ENCODE measurements at regions of chr22 and their contacts with region 1.

Region 1: GRCh38 chr22:23385291-23386244 is 194.5 kb downstream of the IGLL1 start:
- DNase-seq: peak; percentile 93
- ATAC-seq: peak; percentile 80
- H3K4me3 Mint-ChIP-seq: no peak overlapping the region
- H3K27ac Mint-ChIP-seq: no peak overlapping the region
- H3K4me1 Mint-ChIP-seq: peaks cover 12% of the 10 kb centered on the region; the same call in 1 of the 2 replicates
- H3K27me3 Mint-ChIP-seq: peaks cover 3% of the 10 kb centered on the region; the same call in 1 of the 2 replicates
- CTCF ChIP-seq: peak; percentile 100

Region 2: GRCh38 chr22:23315341-23315917 is 70.1 kb before region 1 on chr22:
- CTCF ChIA-PET with region 1: interaction called, 14 read pairs
- POLR2A ChIA-PET with region 1: no interaction called
- DNase-seq: peak; percentile 83
- ATAC-seq: peak; percentile 78
- H3K4me3 Mint-ChIP-seq: no peak overlapping the region
- H3K27ac Mint-ChIP-seq: peak overlapping the region; percentile 57; the same call in 1 of the 2 replicates
- H3K4me1 Mint-ChIP-seq: peaks cover 3% of the 10 kb centered on the region
- H3K27me3 Mint-ChIP-seq: no peaks in the 10 kb centered on the region
- CTCF ChIP-seq: peak; percentile 50; the same call in 1 of the 2 replicates

Region 3: GRCh38 chr22:23368656-23369417 is 16.7 kb before region 1 on chr22:
- CTCF ChIA-PET with region 1: interaction called, 41 read pairs
- POLR2A ChIA-PET with region 1: no interaction called
- DNase-seq: no peak
- ATAC-seq: no peak
- H3K4me3 Mint-ChIP-seq: no peak overlapping the region
- H3K27ac Mint-ChIP-seq: no peak overlapping the region
- H3K4me1 Mint-ChIP-seq: peaks cover 22% of the 10 kb centered on the region
- H3K27me3 Mint-ChIP-seq: peaks cover 89% of the 10 kb centered on the region
- CTCF ChIP-seq: no peak

Region 4: DNA sequence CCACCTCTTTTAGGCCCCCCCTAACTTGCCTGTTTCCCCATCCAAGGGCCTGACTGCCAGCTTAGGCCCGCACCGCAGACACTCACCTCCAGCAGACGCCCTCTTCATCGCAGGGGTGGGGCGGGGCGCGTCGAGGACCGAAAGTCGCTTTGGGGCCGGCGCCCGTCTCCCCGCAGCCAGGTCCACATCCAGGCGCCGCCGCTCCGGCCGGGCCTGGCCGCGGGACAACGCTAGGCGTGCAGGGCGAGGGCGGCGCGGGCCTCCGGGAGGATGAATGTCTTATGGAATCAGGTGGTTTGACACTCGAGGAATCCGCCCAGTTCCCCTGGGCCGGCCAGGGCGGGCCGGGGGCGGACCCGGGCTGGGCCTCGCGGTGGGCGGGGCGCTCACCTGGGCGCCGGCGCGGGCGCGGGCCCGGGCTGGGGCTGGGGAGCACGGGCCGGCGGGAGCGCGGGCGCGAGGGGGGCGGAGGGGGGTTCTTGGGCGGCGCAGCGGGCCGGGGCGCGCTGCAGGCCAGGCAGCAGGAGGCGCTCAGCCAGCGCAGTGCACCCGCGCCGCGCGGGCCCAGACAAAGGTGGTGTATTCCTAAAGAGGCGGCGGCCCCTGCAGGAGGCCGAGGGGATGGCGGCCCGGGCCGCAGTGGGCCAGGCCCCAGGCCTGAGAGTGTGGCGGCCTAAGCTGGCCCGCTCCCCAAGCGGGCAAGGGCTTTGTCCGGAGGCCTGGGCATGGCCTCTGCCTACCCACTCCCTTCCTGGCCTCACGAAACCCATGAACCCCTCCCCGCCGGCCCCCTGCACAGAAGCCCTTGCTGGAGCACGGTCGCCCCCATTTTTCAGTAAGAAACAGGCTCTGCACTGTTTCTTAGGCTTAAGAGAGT is 16.9 kb after region 1 on chr22:
- CTCF ChIA-PET with region 1: interaction called, 18 read pairs
- POLR2A ChIA-PET with region 1: no interaction called
- DNase-seq: peak; percentile 79
- ATAC-seq: peak; percentile 77
- H3K4me3 Mint-ChIP-seq: peak overlapping the region; percentile 60
- H3K27ac Mint-ChIP-seq: no peak overlapping the region
- H3K4me1 Mint-ChIP-seq: peaks cover 14% of the 10 kb centered on the region
- H3K27me3 Mint-ChIP-seq: peaks cover 3% of the 10 kb centered on the region; the same call in 1 of the 2 replicates
- CTCF ChIP-seq: no peak